Adrenal gland (tissue), 19 donors: ENCODE measurements at regions of chr7 and their contacts with region 1.

Region 1: GRCh38 chr7:115996911-115997615 is 33.5 kb downstream of the TFEC start:
- DNase-seq: no peak
- H3K4me3 ChIP-seq: no peak overlapping the region
- H3K27ac ChIP-seq: no peak overlapping the region
- H3K4me1 ChIP-seq: no peaks in the 10 kb centered on the region
- H3K27me3 ChIP-seq: no peaks in the 10 kb centered on the region
- CTCF ChIP-seq: no peak
- POLR2A ChIP-seq: no peak

Region 2: GRCh38 chr7:116013675-116014074 is 16.6 kb after region 1 on chr7:
- intact Hi-C with region 1: loop called in 1 of 2 experiments (anchors 2 kb)
- DNase-seq: no peak
- H3K4me3 ChIP-seq: no peak overlapping the region
- H3K27ac ChIP-seq: no peak overlapping the region
- H3K4me1 ChIP-seq: no peaks in the 10 kb centered on the region
- H3K27me3 ChIP-seq: no peaks in the 10 kb centered on the region
- CTCF ChIP-seq: no peak
- POLR2A ChIP-seq: no peak